Activated T-helper 2 cell treated with anti-CD3 and anti-CD28 coated beads, Interferon-gamma antibody, Interleukin-2, Interleukin-4, amounts not matched to agents 10 μg/mL and 5 μg/mL and 100 μg/mL, durations not matched to agents 14 hours and 24 hours and 36 hours (primary cell): ENCODE measurements at regions of chr9 and their contacts with region 1.

Region 1: GRCh38 chr9:99253772-99254431 is 31.8 kb downstream of the SEC61B start:
- DNase-seq: peak; percentile 71
- H3K4me3 Mint-ChIP-seq: peak overlapping the region; percentile 59
- H3K27ac Mint-ChIP-seq: peak overlapping the region; percentile 97
- H3K4me1 Mint-ChIP-seq: peaks cover 70% of the 10 kb centered on the region
- H3K27me3 Mint-ChIP-seq: no peaks in the 10 kb centered on the region

Region 2: GRCh38 chr9:99221621-99222415 is 32.1 kb before region 1 on chr9 and contains the starts of genes ALG2 and SEC61B:
- intact Hi-C with region 1: loop called (anchors 1 kb)
- DNase-seq: peak; percentile 88
- H3K4me3 Mint-ChIP-seq: peak within 1 kb of the TSS; percentile 93
- H3K27ac Mint-ChIP-seq: peak within 1 kb of the TSS; percentile 100
- H3K4me1 Mint-ChIP-seq: peaks cover 51% of the 10 kb centered on the region
- H3K27me3 Mint-ChIP-seq: no peaks in the 10 kb centered on the region
- total RNA-seq, gene ALG2: 39.5 and 41.7 TPM in 2 replicates
- total RNA-seq, gene SEC61B: 208 and 223 TPM in 2 replicates

Region 3: DNA sequence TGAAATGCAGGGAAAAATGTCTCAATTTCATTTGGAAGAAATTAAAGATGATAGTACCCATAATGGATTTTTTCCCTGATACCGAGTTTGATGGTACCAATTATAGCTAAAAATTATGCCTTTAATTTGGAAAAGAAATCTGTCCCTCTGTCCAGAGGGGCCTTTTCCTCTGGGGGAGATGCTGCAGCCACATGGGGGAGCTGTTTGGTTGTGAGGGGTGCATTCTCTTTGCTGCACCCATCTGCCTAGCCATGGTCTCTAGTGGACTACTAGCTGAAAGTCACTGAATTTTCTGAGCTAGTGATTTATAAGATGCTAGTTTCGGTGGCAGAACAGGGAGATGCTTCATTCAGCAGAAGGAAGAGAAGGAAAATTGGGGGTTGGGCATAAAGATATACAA is 22.2 kb before region 1 on chr9:
- intact Hi-C with region 1: loop called (anchors 2 kb)
- DNase-seq: no peak
- H3K4me3 Mint-ChIP-seq: no peak overlapping the region
- H3K27ac Mint-ChIP-seq: no peak overlapping the region
- H3K4me1 Mint-ChIP-seq: peaks cover 15% of the 10 kb centered on the region
- H3K27me3 Mint-ChIP-seq: no peaks in the 10 kb centered on the region